CD4-positive, alpha-beta memory T cell (primary cell): ENCODE measurements at regions of chr14 and their contacts with region 1.

Region 1: GRCh38 chr14:49852301-49853157 is at the start of gene NEMF:
- DNase-seq: peak; percentile 75 to 84 (median 79)
- H3K4me3 ChIP-seq: peak within 1 kb of the TSS; percentile 83 to 93
- H3K4me3 Mint-ChIP-seq: peak within 1 kb of the TSS; percentile 91 to 98 (median 96)
- H3K27ac ChIP-seq: peak within 1 kb of the TSS; percentile 76
- H3K27ac Mint-ChIP-seq: peak within 1 kb of the TSS; percentile 88 to 99 (median 97)
- H3K4me1 ChIP-seq: peaks cover 37% of the 10 kb centered on the region
- H3K4me1 Mint-ChIP-seq: peaks cover 21 to 53% (median 38%) of the 10 kb centered on the region in 4 donors
- H3K27me3 ChIP-seq: no peaks in the 10 kb centered on the region
- H3K27me3 Mint-ChIP-seq: no peaks in the 10 kb centered on the region
- total RNA-seq, gene NEMF: 104 to 112 TPM

Region 2: DNA sequence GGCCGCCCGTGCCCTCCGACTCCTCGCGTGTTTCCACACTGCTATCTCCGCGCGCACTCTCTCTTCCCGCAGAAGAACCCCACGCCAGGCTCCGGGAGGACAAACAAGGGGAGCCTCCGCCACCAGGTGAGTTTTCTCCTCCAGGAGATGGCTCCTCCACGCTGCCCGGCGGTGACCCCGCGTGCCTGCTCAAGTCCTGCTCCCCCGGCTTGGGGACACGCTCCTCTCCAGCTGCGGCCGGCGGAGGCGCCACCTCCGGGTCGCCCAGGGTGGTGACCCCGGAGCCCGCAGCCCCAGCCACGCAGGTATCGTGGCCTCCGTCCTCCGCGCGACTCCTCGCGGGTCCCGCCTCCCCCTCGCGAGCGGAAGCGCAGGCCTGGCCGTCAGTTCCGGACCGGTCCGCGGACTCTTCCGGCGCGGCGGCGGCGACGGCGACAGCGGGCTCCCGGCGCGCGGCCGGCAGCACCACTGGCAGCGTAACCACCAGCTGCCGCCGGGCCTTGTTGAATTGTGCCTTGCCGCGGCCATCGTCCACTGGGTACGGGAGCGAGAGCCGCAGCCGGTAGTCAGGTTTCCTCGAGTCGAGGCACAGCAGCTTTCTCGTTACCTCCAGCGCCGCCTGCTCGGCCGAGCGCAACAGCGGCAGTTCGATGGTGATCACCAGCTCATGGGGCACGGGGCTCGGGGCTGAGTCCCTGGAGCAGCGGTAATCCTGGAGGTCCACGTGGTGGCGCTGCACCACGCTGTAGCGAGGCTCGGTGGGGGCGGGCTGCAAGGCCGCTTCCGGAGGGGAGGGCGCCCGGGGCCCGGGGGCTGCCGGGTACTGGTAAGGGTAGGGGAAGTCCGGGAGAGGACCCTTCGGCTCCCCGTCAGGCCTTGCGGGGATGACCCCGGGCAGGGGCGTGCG is 218.6 kb before region 1 on chr14:
- CTCF ChIA-PET with region 1: interaction called, 32 read pairs
- POLR2A ChIA-PET with region 1: interaction called, 48 read pairs
- intact Hi-C with region 1: loop called (anchors 2 kb)
- DNase-seq: peak; percentile 92 to 95 (median 94)
- H3K4me3 ChIP-seq: peak overlapping the region; percentile 90 to 99
- H3K4me3 Mint-ChIP-seq: peak overlapping the region; percentile 95 to 100 (median 97)
- H3K27ac ChIP-seq: peak overlapping the region; percentile 99
- H3K27ac Mint-ChIP-seq: peak overlapping the region; percentile 92 to 100 (median 96)
- H3K4me1 ChIP-seq: peaks cover 48% of the 10 kb centered on the region
- H3K4me1 Mint-ChIP-seq: peaks cover 26 to 75% (median 43%) of the 10 kb centered on the region in 4 donors
- H3K27me3 ChIP-seq: no peaks in the 10 kb centered on the region
- H3K27me3 Mint-ChIP-seq: peaks cover 0 to 1% of the 10 kb centered on the region in 2 donors

Region 3: DNA sequence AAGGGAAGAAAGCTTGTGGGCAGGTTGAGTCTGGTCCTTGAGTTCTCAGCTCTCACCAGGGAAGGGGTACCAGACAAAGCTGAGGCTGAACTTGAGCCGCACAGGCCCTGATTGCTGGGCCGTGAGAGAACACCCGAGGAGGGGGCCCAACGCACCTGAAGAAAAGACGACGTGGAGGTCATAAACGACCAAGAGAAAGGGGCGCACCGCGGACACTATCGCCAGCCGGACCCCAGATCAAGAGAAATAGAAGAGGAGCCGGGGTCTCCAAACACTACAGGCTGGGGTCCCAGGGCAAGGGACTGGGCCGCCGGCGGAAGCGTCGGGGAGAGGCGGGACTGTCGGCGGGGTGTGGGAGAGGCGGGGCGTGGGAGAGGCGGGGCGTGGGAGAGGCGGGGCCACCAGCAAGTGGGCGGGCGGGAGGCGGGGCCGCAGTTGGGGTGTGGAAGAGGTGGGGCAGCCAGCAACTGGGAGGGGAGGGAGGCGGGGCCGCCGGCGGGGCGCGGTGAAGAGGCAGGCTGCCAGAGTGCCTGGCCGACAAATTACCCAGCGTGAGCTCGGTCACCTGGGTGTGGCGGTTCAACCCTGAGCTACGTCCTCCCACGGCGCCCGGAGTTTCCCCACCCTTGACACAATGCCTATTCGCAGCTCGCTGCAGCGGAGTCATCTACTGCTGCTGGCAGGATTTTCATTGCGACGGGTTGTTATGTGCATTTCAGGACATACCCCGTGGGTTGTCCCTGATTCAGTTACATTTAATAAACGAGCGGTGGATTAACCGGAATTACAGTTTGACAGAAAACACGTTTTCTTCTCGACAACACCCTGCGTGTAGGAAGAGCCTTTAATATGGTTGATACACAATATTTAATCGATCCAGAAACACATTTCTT is 15.5 kb after region 1 on chr14:
- CTCF ChIA-PET with region 1: interaction called, 277 read pairs
- POLR2A ChIA-PET with region 1: interaction called, 245 read pairs
- intact Hi-C with region 1: no loop called
- DNase-seq: peak; percentile 92 to 98 (median 96)
- H3K4me3 ChIP-seq: peak overlapping the region; percentile 47 to 54
- H3K4me3 Mint-ChIP-seq: peak overlapping the region; percentile 88 to 96 (median 92)
- H3K27ac ChIP-seq: peak overlapping the region; percentile 92
- H3K27ac Mint-ChIP-seq: peak overlapping the region; percentile 88 to 99 (median 98)
- H3K4me1 ChIP-seq: peaks cover 45% of the 10 kb centered on the region
- H3K4me1 Mint-ChIP-seq: peaks cover 12 to 21% (median 14%) of the 10 kb centered on the region in 4 donors
- H3K27me3 ChIP-seq: no peaks in the 10 kb centered on the region
- H3K27me3 Mint-ChIP-seq: no peaks in the 10 kb centered on the region

Region 4: GRCh38 chr14:50003213-50004031 is 150.9 kb after region 1 on chr14:
- CTCF ChIA-PET with region 1: interaction called, 11 read pairs
- POLR2A ChIA-PET with region 1: interaction called, 22 read pairs
- intact Hi-C with region 1: no loop called
- DNase-seq: peak; percentile 76 to 87 (median 79)
- H3K4me3 ChIP-seq: peak overlapping the region; percentile 65 to 69
- H3K4me3 Mint-ChIP-seq: peak overlapping the region; percentile 83 to 96 (median 87)
- H3K27ac ChIP-seq: peak overlapping the region; percentile 94
- H3K27ac Mint-ChIP-seq: peak overlapping the region; percentile 96 to 99 (median 98)
- H3K4me1 ChIP-seq: peaks cover 57% of the 10 kb centered on the region
- H3K4me1 Mint-ChIP-seq: peaks cover 43 to 64% (median 52%) of the 10 kb centered on the region in 4 donors
- H3K27me3 ChIP-seq: no peaks in the 10 kb centered on the region
- H3K27me3 Mint-ChIP-seq: no peaks in the 10 kb centered on the region

Region 5: GRCh38 chr14:50099335-50099734 is 246.8 kb after region 1 on chr14:
- CTCF ChIA-PET with region 1: interaction called, 64 read pairs
- POLR2A ChIA-PET with region 1: interaction called, 11 read pairs
- intact Hi-C with region 1: no loop called
- DNase-seq: peak in 1 of 5 donors; percentile 25
- H3K4me3 ChIP-seq: no peak overlapping the region
- H3K4me3 Mint-ChIP-seq: peak overlapping the region in 5 of 8 donors; percentile 7 to 38 (median 28)
- H3K27ac ChIP-seq: no peak overlapping the region
- H3K27ac Mint-ChIP-seq: peak overlapping the region; percentile 10 to 92 (median 80)
- H3K4me1 ChIP-seq: peaks cover 69% of the 10 kb centered on the region
- H3K4me1 Mint-ChIP-seq: peaks cover 41 to 68% (median 54%) of the 10 kb centered on the region in 4 donors
- H3K27me3 ChIP-seq: no peaks in the 10 kb centered on the region
- H3K27me3 Mint-ChIP-seq: no peaks in the 10 kb centered on the region

Region 6: DNA sequence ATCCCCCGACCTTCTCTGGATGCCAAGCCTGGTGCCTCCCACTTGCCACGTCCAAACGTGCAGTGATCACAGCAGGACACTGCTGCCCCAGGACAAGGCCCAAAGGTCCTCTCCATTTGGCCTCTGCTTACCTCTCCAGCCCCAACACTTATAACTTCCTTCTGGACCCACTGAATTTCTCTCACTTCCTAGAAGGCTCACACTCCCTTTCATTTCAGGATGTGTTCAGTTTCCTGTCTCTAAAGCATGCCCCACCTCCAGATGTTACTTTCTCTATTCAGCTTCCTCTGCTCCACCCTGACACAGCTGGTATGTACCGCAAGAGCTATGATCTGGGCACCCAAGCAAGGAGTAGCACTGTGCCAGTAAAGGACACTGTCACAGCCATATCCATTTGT is 511.2 kb after region 1 on chr14:
- CTCF ChIA-PET with region 1: no interaction called
- POLR2A ChIA-PET with region 1: no interaction called
- intact Hi-C with region 1: no loop called
- DNase-seq: peak; percentile 61 to 77 (median 73)
- H3K4me3 ChIP-seq: peak overlapping the region; percentile 64 to 79
- H3K4me3 Mint-ChIP-seq: peak overlapping the region; percentile 84 to 97 (median 90)
- H3K27ac ChIP-seq: peak overlapping the region; percentile 73
- H3K27ac Mint-ChIP-seq: peak overlapping the region; percentile 83 to 97 (median 93)
- H3K4me1 ChIP-seq: peaks cover 17% of the 10 kb centered on the region
- H3K4me1 Mint-ChIP-seq: peaks cover 28 to 33% (median 30%) of the 10 kb centered on the region in 4 donors
- H3K27me3 ChIP-seq: no peaks in the 10 kb centered on the region
- H3K27me3 Mint-ChIP-seq: no peaks in the 10 kb centered on the region

Region 7: GRCh38 chr14:50532502-50533240 is 680.1 kb after region 1 on chr14 and contains the start of gene MAP4K5:
- CTCF ChIA-PET with region 1: interaction called, 3 read pairs
- POLR2A ChIA-PET with region 1: interaction called, 3 read pairs
- intact Hi-C with region 1: loop called (anchors 2 kb)
- DNase-seq: peak; percentile 85 to 89 (median 88)
- H3K4me3 ChIP-seq: peak within 1 kb of the TSS; percentile 26 to 68
- H3K4me3 Mint-ChIP-seq: peak within 1 kb of the TSS; percentile 88 to 94 (median 93)
- H3K27ac ChIP-seq: peak within 1 kb of the TSS; percentile 69
- H3K27ac Mint-ChIP-seq: peak within 1 kb of the TSS; percentile 85 to 95 (median 91)
- H3K4me1 ChIP-seq: peaks cover 46% of the 10 kb centered on the region
- H3K4me1 Mint-ChIP-seq: peaks cover 33 to 50% (median 43%) of the 10 kb centered on the region in 4 donors
- H3K27me3 ChIP-seq: no peaks in the 10 kb centered on the region
- H3K27me3 Mint-ChIP-seq: no peaks in the 10 kb centered on the region
- total RNA-seq, gene MAP4K5: 42.6 to 43.0 TPM